Activated CD8-positive, alpha-beta T cell treated with anti-CD3 and anti-CD28 coated beads, Interleukin-2, amount 10 ng/mL, durations not matched to agents 7 days and 5 days (primary cell): ENCODE measurements at regions of chr10 and their contacts with region 1.

Region 1: DNA sequence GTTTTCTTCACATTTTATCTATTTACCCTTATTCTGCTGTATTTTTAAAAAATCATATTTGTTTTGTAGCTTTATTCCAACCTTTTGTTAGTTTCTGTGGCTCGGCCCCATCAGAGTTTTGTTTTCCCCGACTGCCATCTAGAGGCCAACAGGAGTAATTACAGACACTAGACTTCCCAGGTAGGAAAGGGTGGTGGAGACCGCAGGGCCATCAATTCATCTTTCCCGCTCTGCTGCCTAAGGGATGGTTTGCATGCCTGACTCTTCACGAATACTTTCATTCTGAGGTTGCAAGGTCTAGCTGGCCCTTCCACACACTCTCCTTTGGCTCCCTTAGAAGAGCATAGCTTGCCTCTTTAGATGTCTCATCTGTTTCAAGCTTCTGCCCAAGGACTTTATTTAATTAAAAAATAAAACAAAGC is 38.3 kb downstream of the LYZL2 start:
- DNase-seq: peak; percentile 51
- ATAC-seq: peak; percentile 57
- H3K4me3 Mint-ChIP-seq: no peak overlapping the region
- H3K27ac Mint-ChIP-seq: no peak overlapping the region
- H3K4me1 Mint-ChIP-seq: peaks cover 3% of the 10 kb centered on the region
- H3K27me3 Mint-ChIP-seq: peaks cover 25% of the 10 kb centered on the region

Region 2: DNA sequence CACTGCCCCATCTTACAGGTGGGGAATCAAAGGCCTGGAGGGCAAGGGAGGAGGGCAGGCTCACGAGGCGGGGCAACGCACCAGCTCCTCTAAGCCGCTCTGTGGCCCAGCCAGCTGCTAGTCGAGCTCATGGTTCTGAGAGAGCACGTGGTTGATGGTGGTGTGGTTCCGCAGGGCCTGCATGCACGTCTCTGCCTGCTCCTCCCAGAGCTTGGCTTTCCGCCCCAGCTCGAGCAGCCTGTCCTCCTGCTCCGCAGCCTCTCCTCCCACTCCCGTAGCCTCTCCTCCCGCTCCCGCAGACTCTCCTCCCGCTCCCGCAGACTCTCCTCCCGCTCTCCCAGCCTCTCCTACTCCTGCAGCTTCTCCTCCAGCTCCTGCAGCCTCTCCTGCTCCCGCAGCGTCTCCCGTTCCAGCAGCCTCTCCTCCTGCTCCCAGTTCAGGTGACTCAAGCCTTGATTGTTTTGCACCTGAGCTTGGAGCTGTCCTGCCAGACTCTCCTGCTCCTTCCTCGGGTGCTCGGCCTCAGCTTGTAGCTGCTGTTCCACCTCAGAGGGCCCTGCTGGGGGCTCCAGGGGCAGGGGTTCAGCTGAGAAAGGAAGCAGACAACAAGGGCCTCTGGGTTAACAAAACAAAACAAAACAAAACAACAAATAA is 223.1 kb before region 1 on chr10:
- CTCF ChIA-PET with region 1: interaction called, 10 read pairs
- POLR2A ChIA-PET with region 1: no interaction called
- DNase-seq: no peak
- ATAC-seq: no peak
- H3K4me3 Mint-ChIP-seq: no peak overlapping the region
- H3K27ac Mint-ChIP-seq: no peak overlapping the region
- H3K4me1 Mint-ChIP-seq: peaks cover 14% of the 10 kb centered on the region
- H3K27me3 Mint-ChIP-seq: peaks cover 12% of the 10 kb centered on the region

Region 3: GRCh38 chr10:30398788-30399187 is 192.5 kb before region 1 on chr10:
- CTCF ChIA-PET with region 1: interaction called, 149 read pairs
- POLR2A ChIA-PET with region 1: no interaction called
- DNase-seq: no peak
- ATAC-seq: peak; percentile 38
- H3K4me3 Mint-ChIP-seq: no peak overlapping the region
- H3K27ac Mint-ChIP-seq: no peak overlapping the region
- H3K4me1 Mint-ChIP-seq: peaks cover 45% of the 10 kb centered on the region
- H3K27me3 Mint-ChIP-seq: peaks cover 11% of the 10 kb centered on the region

Region 4: GRCh38 chr10:30534465-30535144 is 56.7 kb before region 1 on chr10:
- CTCF ChIA-PET with region 1: interaction called, 30 read pairs
- POLR2A ChIA-PET with region 1: no interaction called
- DNase-seq: peak; percentile 86
- ATAC-seq: peak; percentile 48
- H3K4me3 Mint-ChIP-seq: no peak overlapping the region
- H3K27ac Mint-ChIP-seq: no peak overlapping the region
- H3K4me1 Mint-ChIP-seq: peaks cover 59% of the 10 kb centered on the region
- H3K27me3 Mint-ChIP-seq: no peaks in the 10 kb centered on the region

Region 5: DNA sequence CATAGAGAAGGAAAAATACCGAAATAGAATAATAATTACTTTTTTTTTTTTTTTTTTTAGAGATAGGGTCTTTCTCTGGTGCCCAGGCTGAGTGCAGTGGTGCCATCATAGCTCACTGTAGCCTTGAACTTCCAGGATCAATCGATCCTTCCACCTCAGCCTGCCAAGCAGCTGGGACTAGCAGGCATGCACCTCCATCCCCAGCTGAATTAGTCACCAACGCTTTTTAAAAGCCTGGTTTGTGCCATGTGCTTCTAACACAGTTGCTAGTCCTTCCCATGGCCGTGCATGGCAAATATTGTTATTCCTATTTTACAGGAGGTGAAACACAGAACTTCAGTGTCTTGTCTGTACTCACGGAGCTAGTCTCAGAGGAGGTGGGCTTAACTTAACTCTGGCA is 15.1 kb after region 1 on chr10:
- CTCF ChIA-PET with region 1: interaction called, 10 read pairs
- POLR2A ChIA-PET with region 1: no interaction called
- DNase-seq: peak; percentile 9
- ATAC-seq: no peak
- H3K4me3 Mint-ChIP-seq: no peak overlapping the region
- H3K27ac Mint-ChIP-seq: no peak overlapping the region
- H3K4me1 Mint-ChIP-seq: no peaks in the 10 kb centered on the region
- H3K27me3 Mint-ChIP-seq: peaks cover 25% of the 10 kb centered on the region

Region 6: DNA sequence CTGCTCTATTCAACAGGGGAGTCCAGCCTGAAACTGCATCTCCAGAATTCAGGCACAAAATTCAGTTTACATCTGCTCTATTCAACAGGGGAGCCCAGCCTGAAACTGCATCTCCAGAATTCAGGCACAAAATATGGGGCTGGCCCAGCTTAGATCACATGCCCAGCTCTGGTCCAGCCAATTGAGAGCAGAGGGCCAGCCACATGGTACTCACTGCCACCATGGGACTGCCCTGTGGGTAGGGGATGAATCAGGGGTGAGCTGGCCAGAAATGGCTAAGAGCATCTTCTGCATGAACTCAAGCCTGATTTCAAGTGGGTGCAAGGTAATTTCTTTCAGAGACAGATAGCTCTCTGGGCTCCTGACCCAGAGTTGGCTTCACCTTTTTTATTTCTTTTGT is 194.9 kb after region 1 on chr10:
- CTCF ChIA-PET with region 1: no interaction called
- POLR2A ChIA-PET with region 1: no interaction called
- DNase-seq: no peak
- ATAC-seq: no peak
- H3K4me3 Mint-ChIP-seq: peak overlapping the region; percentile 1
- H3K27ac Mint-ChIP-seq: no peak overlapping the region
- H3K4me1 Mint-ChIP-seq: peaks cover 35% of the 10 kb centered on the region
- H3K27me3 Mint-ChIP-seq: peaks cover 4% of the 10 kb centered on the region